ENCODE measurements at regions of chr14 and their contacts with region 1.

Region 1: DNA sequence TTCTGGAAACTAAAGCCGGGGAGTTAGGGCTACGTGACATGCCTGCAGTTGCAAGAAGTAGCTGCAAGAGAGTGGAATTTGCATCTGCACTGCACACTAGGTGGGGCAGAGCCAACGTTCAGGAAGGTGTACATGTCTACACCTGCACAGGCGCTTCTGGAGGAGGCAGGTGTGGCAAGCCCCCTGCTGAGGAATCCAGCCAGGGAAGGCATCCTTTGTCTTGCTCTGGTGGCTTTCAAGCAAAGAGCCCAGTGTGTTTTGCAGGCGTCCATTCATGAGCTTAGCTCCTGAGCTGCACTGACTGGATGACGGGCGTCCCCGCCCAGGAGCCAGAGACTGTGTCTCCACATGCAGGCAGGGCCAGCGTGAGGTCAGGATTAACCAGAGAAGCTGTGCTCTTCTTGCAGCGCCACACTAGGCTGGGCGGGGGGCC is 116.3 kb downstream of the ZFP36L1 start:
- DNase-seq: peak in 1 of 2 experiments; percentile 89
- H3K4me3 ChIP-seq: no peak overlapping the region
- H3K27ac ChIP-seq: no peak overlapping the region
- H3K4me1 ChIP-seq: peaks cover 47% of the 10 kb centered on the region
- H3K27me3 ChIP-seq: no peaks in the 10 kb centered on the region
- CTCF ChIP-seq: no peak

Region 2: DNA sequence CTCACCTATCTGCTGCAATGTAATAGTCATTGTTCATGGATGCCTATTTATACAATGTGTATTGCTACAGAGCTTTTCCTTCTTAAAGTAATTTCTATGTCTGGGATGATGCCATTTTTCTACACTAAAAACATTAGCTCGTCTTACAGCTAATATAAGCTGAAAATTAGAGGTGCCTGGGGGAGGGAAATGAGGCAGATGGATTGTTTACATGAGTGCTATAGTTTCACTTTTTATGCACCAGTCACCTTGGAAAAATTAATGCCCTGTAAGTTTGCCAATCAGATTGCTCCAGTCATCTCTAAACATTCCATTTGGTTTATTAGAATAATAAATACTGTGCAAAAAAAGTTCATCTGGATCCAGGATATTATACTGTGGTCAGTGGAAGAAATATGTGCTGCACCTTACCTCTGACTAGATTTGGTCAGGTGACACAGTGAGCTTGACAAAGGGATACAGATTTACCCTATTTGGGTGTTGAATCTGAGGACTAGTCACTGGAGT is 420.8 kb before region 1 on chr14:
- CTCF ChIA-PET with region 1: no interaction called
- POLR2A ChIA-PET with region 1: interaction called, 12 read pairs
- intact Hi-C with region 1: no loop called
- DNase-seq: peak; percentile 33 to 94
- H3K4me3 ChIP-seq: no peak overlapping the region
- H3K27ac ChIP-seq: peak overlapping the region; percentile 71
- H3K4me1 ChIP-seq: peaks cover 47% of the 10 kb centered on the region
- H3K27me3 ChIP-seq: no peaks in the 10 kb centered on the region
- CTCF ChIP-seq: no peak

Region 3: GRCh38 chr14:68627880-68628607 is 48.5 kb before region 1 on chr14:
- CTCF ChIA-PET with region 1: no interaction called
- POLR2A ChIA-PET with region 1: interaction called, 15 read pairs
- intact Hi-C with region 1: no loop called
- DNase-seq: peak; percentile 72 to 81
- H3K4me3 ChIP-seq: peak overlapping the region; percentile 60
- H3K27ac ChIP-seq: peak overlapping the region; percentile 92
- H3K4me1 ChIP-seq: peaks cover 45% of the 10 kb centered on the region
- H3K27me3 ChIP-seq: no peaks in the 10 kb centered on the region
- CTCF ChIP-seq: no peak

Measured in PC-9 (cell line).